Activated CD4-positive, alpha-beta T cell treated with anti-CD3 and anti-CD28 coated beads, Interleukin-2, amount 10 ng/mL, durations not matched to agents 24 days and 14 days (primary cell): ENCODE measurements at regions of chr9 and their contacts with region 1.

Region 1: GRCh38 chr9:126722252-126723078 is 82.4 kb upstream of the ZBTB43 start:
- DNase-seq: peak; percentile 96
- H3K4me3 Mint-ChIP-seq: peak overlapping the region; percentile 90
- H3K27ac Mint-ChIP-seq: peak overlapping the region; percentile 94
- H3K4me1 Mint-ChIP-seq: peaks cover 30% of the 10 kb centered on the region
- H3K27me3 Mint-ChIP-seq: peaks cover 19% of the 10 kb centered on the region

Region 2: DNA sequence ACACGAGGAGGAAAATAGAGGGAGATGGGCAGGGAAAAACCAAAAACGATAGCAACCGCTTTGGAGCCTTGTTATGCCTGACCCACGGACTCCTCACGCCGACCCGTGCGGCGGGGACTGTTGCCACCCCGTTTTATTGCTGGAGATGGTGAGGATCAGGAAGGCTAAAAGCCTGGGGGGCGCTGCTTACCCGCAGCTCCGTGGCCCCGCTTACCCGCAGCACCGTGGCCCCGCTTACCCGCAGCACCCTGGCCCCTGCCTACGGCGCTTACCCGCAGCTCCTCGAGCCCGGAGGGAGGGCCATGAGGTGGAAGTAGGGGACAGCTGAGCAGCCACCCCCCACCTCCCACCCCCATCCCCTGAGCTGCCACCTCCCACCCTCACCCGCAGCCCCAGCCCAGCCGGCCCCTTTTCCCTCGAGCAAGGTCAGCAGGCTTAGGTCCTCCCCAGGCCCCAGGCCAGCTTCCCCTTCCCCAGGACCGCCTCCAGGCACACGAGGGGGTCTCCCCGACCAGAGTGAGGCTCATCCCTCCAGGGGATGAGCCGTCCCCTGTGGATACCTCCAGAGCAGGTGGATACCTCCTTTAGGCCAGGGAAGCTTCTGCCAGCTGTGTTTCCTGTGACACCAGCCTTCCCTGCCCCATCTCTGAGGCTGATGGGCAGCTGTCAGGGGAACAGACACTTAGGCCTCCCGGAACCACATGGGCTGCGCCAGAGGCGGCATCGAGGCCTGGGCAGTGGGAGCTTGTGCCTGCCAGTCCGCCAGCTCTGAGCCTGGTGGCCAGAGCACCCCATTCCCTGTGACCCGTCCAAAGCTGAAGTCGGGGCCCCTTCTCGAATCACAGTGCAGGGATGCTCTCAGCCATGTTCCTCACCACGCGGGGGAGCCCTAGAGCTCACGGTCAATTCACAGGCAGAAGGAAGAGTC is 16.4 kb before region 1 on chr9:
- intact Hi-C with region 1: loop called (anchors 1 kb)
- DNase-seq: peak; percentile 93
- H3K4me3 Mint-ChIP-seq: peak overlapping the region; percentile 77
- H3K27ac Mint-ChIP-seq: peak overlapping the region; percentile 71
- H3K4me1 Mint-ChIP-seq: peaks cover 17% of the 10 kb centered on the region
- H3K27me3 Mint-ChIP-seq: peaks cover 21% of the 10 kb centered on the region

Region 3: DNA sequence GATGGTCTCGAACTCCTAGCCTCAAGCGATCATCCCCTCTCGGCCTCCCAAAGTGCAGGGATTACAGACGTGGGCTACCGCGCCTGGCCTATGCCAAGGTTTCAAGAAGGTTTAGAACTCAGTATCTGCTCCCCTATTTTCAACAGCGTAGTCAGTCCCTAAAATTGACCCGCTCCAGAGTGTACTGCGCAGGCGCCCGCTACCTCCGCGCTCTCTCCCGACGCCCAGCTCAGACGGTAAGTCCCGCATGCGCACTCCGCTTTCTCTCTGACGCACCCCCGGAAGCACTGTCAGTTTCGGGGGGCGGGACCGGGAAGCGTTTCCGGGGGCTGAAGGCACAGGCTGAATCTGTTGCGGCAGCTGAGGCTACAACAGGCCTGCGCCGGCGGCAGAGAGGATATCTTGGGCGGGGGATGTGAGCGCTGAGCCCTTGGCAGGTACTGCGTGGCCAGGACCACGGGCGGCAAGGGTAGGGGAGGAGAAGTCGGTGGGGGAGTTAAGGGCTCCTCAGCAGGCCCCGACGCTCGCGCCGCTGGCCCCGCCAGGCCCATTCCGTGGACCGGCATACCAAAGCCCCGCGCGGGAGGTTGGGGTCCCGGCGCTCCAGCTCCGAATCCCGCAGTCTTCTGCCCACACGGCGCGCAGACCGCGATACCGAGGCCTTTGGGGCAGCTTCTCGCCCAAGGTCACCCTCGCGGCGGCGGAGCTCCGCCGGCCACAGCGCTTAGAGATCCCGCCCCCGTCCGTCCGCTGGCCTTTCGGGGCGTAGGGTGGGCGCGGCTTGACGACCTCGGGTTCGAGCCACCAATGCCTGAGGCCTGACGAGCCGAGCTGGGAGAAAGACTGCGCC is 82.5 kb after region 1 on chr9 and contains the start of gene ZBTB43:
- intact Hi-C with region 1: loop called (anchors 1 kb)
- DNase-seq: peak; percentile 100
- H3K4me3 Mint-ChIP-seq: peak within 1 kb of the TSS; percentile 94
- H3K27ac Mint-ChIP-seq: peak within 1 kb of the TSS; percentile 98
- H3K4me1 Mint-ChIP-seq: peaks cover 31% of the 10 kb centered on the region
- H3K27me3 Mint-ChIP-seq: peaks cover 2% of the 10 kb centered on the region
- total RNA-seq, gene ZBTB43: 10.6 and 18.8 TPM in 2 replicates